Gastrocnemius medialis (tissue), 4 donors: ENCODE measurements at regions of chr11 and their contacts with region 1.

Region 1: GRCh38 chr11:18698341-18699268 is at the start of gene TMEM86A:
- DNase-seq: peak; percentile 81 to 93
- ATAC-seq: peak; percentile 92 to 95
- H3K4me3 ChIP-seq: peak within 1 kb of the TSS; percentile 63 to 84 (median 78)
- H3K27ac ChIP-seq: peak within 1 kb of the TSS; percentile 77 to 88 (median 86)
- H3K4me1 ChIP-seq: peaks cover 8% of the 10 kb centered on the region in 2 donors
- H3K27me3 ChIP-seq: no peaks in the 10 kb centered on the region
- CTCF ChIP-seq: peak in 1 of 5 experiments; percentile 18
- POLR2A ChIP-seq: peak; percentile 84 to 94
- total RNA-seq, gene TMEM86A: 1.7 to 3.6 (median 2.8) TPM

Region 2: DNA sequence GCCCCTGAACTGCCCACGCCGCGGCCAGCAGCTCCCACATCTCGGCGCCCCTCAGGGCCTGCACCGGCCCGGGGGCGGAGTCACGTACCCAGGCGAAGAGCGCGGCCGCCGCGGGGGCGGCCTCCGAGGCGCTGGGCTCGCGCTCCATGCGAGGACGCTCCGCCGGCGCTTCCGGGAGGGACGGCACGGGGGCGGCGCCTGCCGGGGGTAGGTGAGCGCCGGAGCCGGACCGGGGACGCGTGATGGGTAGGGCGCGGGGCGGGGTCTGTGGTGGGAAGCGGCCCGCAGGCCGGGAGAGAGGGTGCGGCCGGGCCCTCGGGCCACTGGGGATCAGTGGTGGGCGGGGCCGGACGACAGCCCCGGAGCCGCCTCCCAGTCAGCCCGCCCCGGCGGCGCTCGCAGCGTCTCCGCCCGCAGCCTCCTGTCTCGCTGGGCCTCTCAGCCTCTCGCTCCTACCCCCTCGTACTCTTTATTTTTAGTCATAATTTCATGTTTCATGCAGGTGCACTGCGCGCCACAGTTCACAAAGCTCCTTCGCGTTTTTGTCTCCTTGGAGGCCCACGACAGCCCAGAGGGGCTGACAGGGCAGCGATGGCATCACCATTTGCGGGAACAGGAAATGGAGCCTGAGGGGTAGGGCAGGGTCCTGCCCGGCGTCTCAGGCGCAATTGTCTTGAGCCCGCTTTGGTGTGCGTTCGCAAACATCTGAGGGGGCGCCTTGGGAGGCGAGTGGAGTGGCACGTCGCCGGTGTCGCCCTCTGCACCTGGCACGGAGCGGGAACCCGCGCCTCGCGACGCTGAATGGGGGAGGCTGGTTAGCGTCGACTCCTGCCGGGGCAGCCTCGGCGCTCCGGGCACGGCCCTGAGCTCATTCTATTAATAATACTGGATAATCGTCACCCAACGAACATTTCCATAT is 685.5 kb before region 1 on chr11 and contains the start of gene SERGEF:
- in situ Hi-C with region 1: no loop called
- intact Hi-C with region 1: loop called (anchors 10 kb)
- DNase-seq: peak; percentile 90 to 92
- ATAC-seq: peak; percentile 84 to 86
- H3K4me3 ChIP-seq: peak within 1 kb of the TSS; percentile 78 to 100 (median 91)
- H3K27ac ChIP-seq: peak within 1 kb of the TSS; percentile 78 to 91 (median 86)
- H3K4me1 ChIP-seq: peaks cover 9 to 14% of the 10 kb centered on the region in 2 donors
- H3K27me3 ChIP-seq: no peaks in the 10 kb centered on the region
- CTCF ChIP-seq: peak in 2 of 5 experiments; percentile 24 to 63
- POLR2A ChIP-seq: peak; percentile 60 to 67
- total RNA-seq, gene SERGEF: 11.8 to 34.7 (median 24.5) TPM

Region 3: GRCh38 chr11:18221274-18221876 is 477.2 kb before region 1 on chr11:
- in situ Hi-C with region 1: no loop called
- intact Hi-C with region 1: no loop called
- DNase-seq: no peak
- ATAC-seq: no peak
- H3K4me3 ChIP-seq: no peak overlapping the region
- H3K27ac ChIP-seq: no peak overlapping the region
- H3K4me1 ChIP-seq: no peaks in the 10 kb centered on the region
- H3K27me3 ChIP-seq: no peaks in the 10 kb centered on the region
- CTCF ChIP-seq: no peak
- POLR2A ChIP-seq: no peak

Region 4: GRCh38 chr11:18321980-18322711 is 376.5 kb before region 1 on chr11 and contains the starts of genes GTF2H1 and HPS5:
- in situ Hi-C with region 1: no loop called
- intact Hi-C with region 1: loop called (anchors 2 kb)
- DNase-seq: peak; percentile 93 to 95
- ATAC-seq: peak; percentile 99 to 100
- H3K4me3 ChIP-seq: peak within 1 kb of the TSS; percentile 88 to 89 (median 88)
- H3K27ac ChIP-seq: peak within 1 kb of the TSS; percentile 95 to 99 (median 98)
- H3K4me1 ChIP-seq: peaks cover 31 to 37% of the 10 kb centered on the region in 2 donors
- H3K27me3 ChIP-seq: no peaks in the 10 kb centered on the region
- CTCF ChIP-seq: peak in 1 of 5 experiments; percentile 54
- POLR2A ChIP-seq: peak; percentile 53 to 81
- total RNA-seq, gene GTF2H1: 30.9 to 45.6 (median 33.2) TPM
- total RNA-seq, gene HPS5: 5.3 to 13.1 (median 9.7) TPM

Region 5: GRCh38 chr11:18588297-18589252 is 110.0 kb before region 1 on chr11 and contains the start of gene UEVLD:
- in situ Hi-C with region 1: no loop called
- intact Hi-C with region 1: loop called (anchors 1 kb)
- DNase-seq: peak; percentile 81 to 87
- ATAC-seq: peak; percentile 92 to 97
- H3K4me3 ChIP-seq: peak within 1 kb of the TSS; percentile 72 to 91 (median 80)
- H3K27ac ChIP-seq: peak within 1 kb of the TSS; percentile 86 to 91 (median 90)
- H3K4me1 ChIP-seq: peaks cover 41 to 42% of the 10 kb centered on the region in 2 donors
- H3K27me3 ChIP-seq: no peaks in the 10 kb centered on the region
- CTCF ChIP-seq: peak in 1 of 5 experiments; percentile 30
- POLR2A ChIP-seq: peak; percentile 63 to 78
- total RNA-seq, gene UEVLD: 27.4 to 58.8 (median 30.3) TPM

Region 6: GRCh38 chr11:18721561-18722292 is 23.1 kb after region 1 on chr11:
- in situ Hi-C with region 1: no loop called
- intact Hi-C with region 1: loop called (anchors 2 kb)
- DNase-seq: no peak
- ATAC-seq: peak; percentile 66 to 72
- H3K4me3 ChIP-seq: peak overlapping the region; percentile 59 to 74 (median 65)
- H3K27ac ChIP-seq: peak overlapping the region; percentile 42 to 73 (median 55)
- H3K4me1 ChIP-seq: peaks cover 0 to 7% of the 10 kb centered on the region in 2 donors
- H3K27me3 ChIP-seq: no peaks in the 10 kb centered on the region
- CTCF ChIP-seq: peak; percentile 41 to 81 (median 64)
- POLR2A ChIP-seq: no peak

Region 7: DNA sequence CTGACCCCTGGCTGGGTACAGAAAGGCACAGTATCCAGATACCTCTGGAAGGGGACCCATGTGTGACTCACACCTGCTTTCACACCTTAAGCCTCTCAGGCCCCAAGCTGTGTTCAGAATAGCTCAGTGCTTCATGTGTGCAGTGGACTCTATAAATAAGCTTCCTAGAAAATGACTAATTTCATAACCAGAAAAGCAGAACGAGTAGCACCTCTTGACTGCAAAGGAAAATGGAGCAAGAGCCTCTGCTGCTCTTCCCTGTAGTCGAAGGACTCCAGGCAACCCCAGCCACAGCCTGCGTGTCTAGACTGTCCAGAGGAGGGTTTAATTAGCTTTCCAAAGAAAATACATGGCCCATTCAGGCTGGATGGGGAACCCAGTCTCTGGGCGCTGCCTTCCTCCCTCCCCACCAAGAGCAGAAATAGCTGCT is 69.9 kb after region 1 on chr11:
- in situ Hi-C with region 1: no loop called
- intact Hi-C with region 1: no loop called
- DNase-seq: peak in 1 of 2 donors; percentile 40
- ATAC-seq: peak; percentile 64 to 86
- H3K4me3 ChIP-seq: no peak overlapping the region
- H3K27ac ChIP-seq: peak overlapping the region in 1 of 4 donors; percentile 58
- H3K4me1 ChIP-seq: no peaks in the 10 kb centered on the region
- H3K27me3 ChIP-seq: no peaks in the 10 kb centered on the region
- CTCF ChIP-seq: no peak
- POLR2A ChIP-seq: no peak

Region 8: DNA sequence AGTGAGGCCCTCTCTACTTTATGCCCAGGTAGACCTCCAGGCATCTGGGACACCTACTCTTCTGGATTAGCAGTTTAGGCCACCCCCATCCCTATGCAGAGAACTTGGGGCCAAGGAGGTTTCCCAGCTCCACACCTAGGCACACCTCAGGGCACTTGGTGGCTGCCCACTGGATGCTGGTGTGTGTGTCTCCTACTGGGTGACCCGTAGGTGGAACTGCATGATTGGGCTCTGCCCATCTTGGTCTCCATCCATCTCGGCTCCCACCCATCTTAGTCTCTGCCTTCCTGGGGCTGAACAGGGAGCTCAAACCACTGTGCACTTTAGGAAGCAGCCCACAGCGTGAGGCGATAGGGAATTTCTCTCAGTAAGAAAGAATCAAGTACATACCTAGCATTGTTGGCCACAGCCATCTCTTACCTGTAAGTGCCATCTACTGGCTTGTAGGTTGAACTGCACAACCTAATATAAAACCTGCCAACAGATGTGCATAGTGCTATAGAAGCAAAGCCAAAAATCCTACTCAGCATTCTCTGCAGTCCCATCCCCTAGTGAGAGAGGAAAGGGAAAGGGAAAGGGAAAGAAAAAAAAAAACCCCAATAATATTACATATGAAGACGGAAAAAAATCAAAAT is 154.6 kb after region 1 on chr11:
- in situ Hi-C with region 1: no loop called
- intact Hi-C with region 1: no loop called
- DNase-seq: no peak
- ATAC-seq: no peak
- H3K4me3 ChIP-seq: no peak overlapping the region
- H3K27ac ChIP-seq: no peak overlapping the region
- H3K4me1 ChIP-seq: no peaks in the 10 kb centered on the region
- H3K27me3 ChIP-seq: no peaks in the 10 kb centered on the region
- CTCF ChIP-seq: no peak
- POLR2A ChIP-seq: no peak